ENCODE measurements at regions of chr17 and their contacts with region 1.

Region 1: GRCh38 chr17:38430316-38430715 is 2.1 kb downstream of the ARHGAP23 start:
- DNase-seq: no peak
- H3K4me3 ChIP-seq: no peak overlapping the region
- H3K27ac ChIP-seq: no peak overlapping the region
- H3K4me1 ChIP-seq: peaks cover 0 to 7% (median 0%) of the 10 kb centered on the region in 3 donors
- H3K27me3 ChIP-seq: no peaks in the 10 kb centered on the region
- CTCF ChIP-seq: no peak

Region 2: GRCh38 chr17:38498186-38498752 is 68.0 kb after region 1 on chr17:
- intact Hi-C with region 1: loop called (anchors 10 kb)
- DNase-seq: peak in 1 of 5 donors; percentile 63
- H3K4me3 ChIP-seq: no peak overlapping the region
- H3K27ac ChIP-seq: no peak overlapping the region
- H3K4me1 ChIP-seq: no peaks in the 10 kb centered on the region
- H3K27me3 ChIP-seq: no peaks in the 10 kb centered on the region
- CTCF ChIP-seq: no peak

Region 3: DNA sequence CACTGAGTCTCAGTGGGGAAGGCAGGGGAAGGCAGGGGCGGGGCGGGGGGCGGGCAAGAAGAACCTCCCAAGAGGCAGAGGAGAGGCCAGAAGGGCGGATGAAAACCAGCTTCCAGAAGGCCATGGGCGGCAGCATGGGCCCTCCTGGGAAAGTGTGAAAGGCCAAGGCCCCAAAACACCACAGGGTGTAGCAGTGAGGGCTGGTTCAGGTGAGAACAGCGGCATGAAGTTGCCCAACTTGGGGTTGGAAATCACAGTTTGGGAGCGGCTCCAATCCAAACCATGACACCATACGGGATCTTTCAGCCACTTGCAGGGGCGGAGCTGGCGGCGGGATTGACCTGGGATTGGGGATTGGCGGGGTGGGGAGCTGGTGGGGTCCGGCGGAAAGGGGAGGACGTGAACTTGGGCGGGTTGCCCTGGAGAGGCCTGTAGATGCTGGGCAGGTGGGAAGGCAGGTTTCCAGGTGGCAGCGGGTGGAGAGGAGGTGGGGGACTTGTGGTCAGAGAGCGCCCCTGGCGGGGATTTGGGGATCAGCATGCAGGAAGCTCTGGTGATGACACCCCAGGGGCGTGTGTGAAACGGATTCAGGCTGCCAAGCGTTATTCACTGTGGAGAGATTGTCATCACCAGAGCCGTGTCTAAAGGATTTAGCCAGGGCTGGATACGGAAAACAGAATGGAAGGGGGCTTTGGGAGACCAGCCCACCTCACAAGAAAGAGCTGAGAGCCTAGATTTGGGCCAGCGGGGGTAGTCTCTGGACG is 78.9 kb after region 1 on chr17:
- intact Hi-C with region 1: no loop called
- DNase-seq: peak; percentile 89 to 94 (median 93)
- H3K4me3 ChIP-seq: peak overlapping the region in 1 of 3 donors; percentile 6
- H3K27ac ChIP-seq: no peak overlapping the region
- H3K4me1 ChIP-seq: no peaks in the 10 kb centered on the region
- H3K27me3 ChIP-seq: no peaks in the 10 kb centered on the region
- CTCF ChIP-seq: peak; percentile 48

Region 4: DNA sequence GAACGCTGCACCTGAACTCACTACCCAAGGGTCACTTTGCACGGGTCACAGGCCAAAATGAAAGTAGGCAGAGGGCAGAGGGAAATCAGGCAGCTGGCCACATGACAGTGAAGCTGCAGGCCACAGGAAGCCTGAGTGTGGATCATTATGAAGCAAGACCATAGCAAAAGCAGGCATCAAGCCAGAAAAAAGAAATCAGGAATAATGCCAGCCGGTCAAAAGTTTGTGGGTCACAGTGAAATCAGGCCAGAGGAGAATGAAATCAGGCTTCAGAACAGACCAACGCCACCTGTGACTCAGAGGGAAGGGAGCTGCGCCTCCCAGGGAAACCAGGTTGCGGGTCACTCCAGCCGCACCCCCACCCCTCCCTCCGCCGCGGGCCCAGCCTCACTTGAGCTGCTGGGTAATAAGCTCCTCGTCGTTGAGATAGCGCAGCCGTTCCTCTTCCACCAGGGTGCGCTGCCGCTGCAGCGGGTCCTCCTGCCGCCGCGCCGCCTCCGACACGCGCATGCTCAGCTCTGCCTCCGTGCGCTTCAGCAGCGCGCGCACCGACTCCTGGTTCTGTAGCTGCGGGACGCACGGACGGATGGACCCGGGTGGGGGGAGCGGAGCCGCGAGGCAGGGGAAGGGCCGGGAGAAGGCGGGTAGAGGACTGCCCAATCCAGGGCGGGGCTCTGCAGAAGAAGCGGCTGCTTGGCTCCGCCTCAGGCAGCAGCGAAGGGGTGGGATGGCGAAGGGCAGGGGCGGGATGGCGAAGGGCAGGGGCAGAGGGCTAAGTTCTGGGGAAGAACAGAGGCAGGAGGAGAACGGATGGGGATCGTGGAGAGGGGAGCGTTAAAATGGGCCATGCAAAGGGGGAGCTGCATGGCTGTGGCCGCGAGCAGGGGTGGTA is 127.8 kb after region 1 on chr17:
- intact Hi-C with region 1: no loop called
- DNase-seq: peak; percentile 90 to 97 (median 92)
- H3K4me3 ChIP-seq: peak overlapping the region in 2 of 3 donors; percentile 35 to 53
- H3K27ac ChIP-seq: peak overlapping the region in 1 of 2 donors; percentile 13
- H3K4me1 ChIP-seq: peaks cover 0 to 23% (median 0%) of the 10 kb centered on the region in 3 donors
- H3K27me3 ChIP-seq: peaks cover 18% of the 10 kb centered on the region
- CTCF ChIP-seq: peak; percentile 98